Lower leg skin (tissue), 4 donors: ENCODE measurements at regions of chr4 and their contacts with region 1.

Region 1: DNA sequence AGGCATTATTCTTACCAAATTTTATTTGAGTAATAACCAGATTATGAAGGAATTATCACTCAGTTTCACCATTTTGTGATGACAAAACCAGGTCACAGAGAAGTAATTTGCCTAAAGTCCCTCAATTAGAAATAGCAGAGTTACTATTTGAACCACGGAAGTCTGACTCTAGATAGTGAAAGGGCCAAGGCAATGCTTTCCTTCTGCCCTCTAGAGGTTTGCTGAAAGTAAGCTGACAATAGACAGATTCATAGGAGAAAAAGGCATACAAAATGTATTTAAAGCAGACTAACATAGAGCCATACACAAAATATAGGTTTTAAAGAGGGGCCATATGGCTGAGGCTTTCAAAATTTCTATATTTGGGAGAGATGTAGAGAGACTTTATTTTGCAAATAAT is 43.1 kb downstream of the CXXC4 start:
- DNase-seq: no peak
- H3K4me3 ChIP-seq: no peak overlapping the region
- CTCF ChIP-seq: no peak
- POLR2A ChIP-seq: no peak

Region 2: GRCh38 chr4:103904123-103904522 is 547.5 kb before region 1 on chr4:
- intact Hi-C with region 1: no loop called
- DNase-seq: no peak
- H3K4me3 ChIP-seq: no peak overlapping the region
- CTCF ChIP-seq: no peak
- POLR2A ChIP-seq: no peak

Region 3: GRCh38 chr4:104093247-104093646 is 358.3 kb before region 1 on chr4:
- intact Hi-C with region 1: loop called (anchors 10 kb)
- DNase-seq: no peak
- H3K4me3 ChIP-seq: no peak overlapping the region
- CTCF ChIP-seq: no peak
- POLR2A ChIP-seq: no peak